Natural killer cell (primary cell): ENCODE measurements at regions of chr20 and their contacts with region 1.

Region 1: GRCh38 chr20:63478346-63479302 is 6.2 kb upstream of the KCNQ2 start:
- DNase-seq: no peak
- ATAC-seq: no peak
- H3K4me3 ChIP-seq: no peak overlapping the region
- H3K4me3 Mint-ChIP-seq: no peak overlapping the region
- H3K27ac ChIP-seq: no peak overlapping the region
- H3K27ac Mint-ChIP-seq: no peak overlapping the region
- H3K4me1 ChIP-seq: no peaks in the 10 kb centered on the region
- H3K4me1 Mint-ChIP-seq: peaks cover 0 to 6% of the 10 kb centered on the region in 2 donors
- H3K27me3 ChIP-seq: peaks cover 15% of the 10 kb centered on the region
- H3K27me3 Mint-ChIP-seq: peaks cover 36% of the 10 kb centered on the region in 2 donors
- CTCF ChIP-seq: no peak

Region 2: GRCh38 chr20:63416631-63417030 is 62.0 kb before region 1 on chr20:
- intact Hi-C with region 1: no loop called
- DNase-seq: no peak
- ATAC-seq: no peak
- H3K4me3 ChIP-seq: no peak overlapping the region
- H3K4me3 Mint-ChIP-seq: no peak overlapping the region
- H3K27ac ChIP-seq: no peak overlapping the region
- H3K27ac Mint-ChIP-seq: no peak overlapping the region
- H3K4me1 ChIP-seq: no peaks in the 10 kb centered on the region
- H3K4me1 Mint-ChIP-seq: no peaks in the 10 kb centered on the region
- H3K27me3 ChIP-seq: no peaks in the 10 kb centered on the region
- H3K27me3 Mint-ChIP-seq: peaks cover 0 to 3% of the 10 kb centered on the region in 2 donors
- CTCF ChIP-seq: no peak

Region 3: DNA sequence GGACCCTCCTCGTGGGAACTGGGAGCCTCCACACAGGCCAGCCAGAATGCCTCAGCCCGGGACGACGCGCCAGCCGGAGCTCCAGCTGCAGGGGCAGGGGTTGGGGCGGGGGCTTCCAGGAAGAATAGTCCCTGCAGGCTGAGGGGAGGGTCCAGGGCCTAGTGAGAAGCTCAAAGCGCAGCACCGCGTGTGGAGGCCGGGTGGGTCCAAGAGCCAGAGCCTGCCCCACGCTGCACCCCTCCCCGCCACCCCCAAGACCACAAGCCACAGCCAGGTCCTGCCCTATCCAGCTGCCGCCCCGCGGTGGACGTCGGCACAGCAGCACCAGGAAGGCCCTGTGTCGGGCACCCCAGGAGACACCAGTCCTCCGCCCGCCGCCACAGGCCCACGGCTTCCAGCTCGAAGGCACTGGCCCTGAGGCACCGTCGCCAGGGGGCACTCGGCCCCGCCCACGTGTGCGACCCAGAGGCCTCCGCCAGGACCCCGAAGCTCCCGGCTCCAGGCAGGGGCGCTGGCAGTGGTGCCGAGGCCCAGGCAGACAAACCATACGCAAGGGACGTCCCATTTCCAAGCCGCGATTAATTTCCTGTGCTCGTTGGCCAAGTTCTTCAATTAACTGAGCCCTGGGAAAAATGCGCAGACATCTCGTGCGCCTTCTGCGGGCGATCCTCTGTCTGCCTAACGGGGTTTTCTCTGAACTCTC is 25.7 kb before region 1 on chr20:
- intact Hi-C with region 1: no loop called
- DNase-seq: peak in 1 of 2 donors; percentile 33
- ATAC-seq: peak in 2 of 3 donors; percentile 9 to 62
- H3K4me3 ChIP-seq: no peak overlapping the region
- H3K4me3 Mint-ChIP-seq: no peak overlapping the region
- H3K27ac ChIP-seq: no peak overlapping the region
- H3K27ac Mint-ChIP-seq: no peak overlapping the region
- H3K4me1 ChIP-seq: peaks cover 15% of the 10 kb centered on the region
- H3K4me1 Mint-ChIP-seq: peaks cover 0 to 4% of the 10 kb centered on the region in 2 donors
- H3K27me3 ChIP-seq: peaks cover 9% of the 10 kb centered on the region
- H3K27me3 Mint-ChIP-seq: peaks cover 0 to 11% of the 10 kb centered on the region in 2 donors
- CTCF ChIP-seq: no peak

Region 4: DNA sequence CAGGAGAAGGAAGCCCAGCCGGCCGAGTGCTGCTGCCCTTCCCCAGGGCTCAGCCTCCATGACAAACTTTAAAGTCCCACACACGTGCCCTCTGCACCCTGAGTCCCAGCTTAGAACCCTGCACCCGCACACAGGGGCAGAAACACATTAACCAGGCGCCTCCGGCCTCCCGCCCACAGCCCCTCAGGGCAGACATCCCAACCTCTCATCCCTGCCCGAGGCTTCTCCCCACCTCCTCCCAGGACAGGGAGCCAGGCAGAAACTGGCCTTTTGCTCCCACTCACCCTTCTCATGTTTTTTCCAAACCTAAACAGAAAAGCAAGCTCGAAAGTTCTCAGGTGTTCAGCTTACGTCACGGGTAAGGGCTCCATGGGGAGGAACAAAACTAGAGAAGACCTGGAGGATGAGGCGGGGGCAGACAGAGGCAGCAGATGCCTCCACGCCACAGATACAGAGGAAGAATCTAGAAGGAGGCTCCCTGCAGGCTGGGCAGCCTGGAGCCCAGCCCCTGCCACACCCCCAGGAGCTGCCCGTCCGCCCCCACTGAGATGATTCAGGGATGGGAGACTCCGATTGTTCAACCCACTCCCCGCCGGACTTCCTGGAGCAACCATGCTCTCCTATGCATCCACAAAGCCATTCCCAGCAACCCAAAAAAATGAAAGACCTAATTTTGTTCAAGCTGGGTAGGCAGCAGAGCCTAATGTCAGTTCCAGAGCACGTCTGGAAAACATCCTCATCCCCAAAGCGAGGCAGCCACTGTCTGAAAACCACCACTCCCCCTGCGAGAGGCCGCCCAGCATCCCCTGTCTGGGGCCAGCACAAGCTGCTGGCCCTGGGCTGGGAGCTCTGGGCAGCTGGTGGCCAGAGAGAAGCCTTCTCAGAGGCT is 15.0 kb before region 1 on chr20:
- intact Hi-C with region 1: loop called (anchors 2 kb)
- DNase-seq: no peak
- ATAC-seq: no peak
- H3K4me3 ChIP-seq: no peak overlapping the region
- H3K4me3 Mint-ChIP-seq: no peak overlapping the region
- H3K27ac ChIP-seq: no peak overlapping the region
- H3K27ac Mint-ChIP-seq: no peak overlapping the region
- H3K4me1 ChIP-seq: no peaks in the 10 kb centered on the region
- H3K4me1 Mint-ChIP-seq: no peaks in the 10 kb centered on the region
- H3K27me3 ChIP-seq: no peaks in the 10 kb centered on the region
- H3K27me3 Mint-ChIP-seq: peaks cover 6 to 25% of the 10 kb centered on the region in 2 donors
- CTCF ChIP-seq: no peak

Region 5: DNA sequence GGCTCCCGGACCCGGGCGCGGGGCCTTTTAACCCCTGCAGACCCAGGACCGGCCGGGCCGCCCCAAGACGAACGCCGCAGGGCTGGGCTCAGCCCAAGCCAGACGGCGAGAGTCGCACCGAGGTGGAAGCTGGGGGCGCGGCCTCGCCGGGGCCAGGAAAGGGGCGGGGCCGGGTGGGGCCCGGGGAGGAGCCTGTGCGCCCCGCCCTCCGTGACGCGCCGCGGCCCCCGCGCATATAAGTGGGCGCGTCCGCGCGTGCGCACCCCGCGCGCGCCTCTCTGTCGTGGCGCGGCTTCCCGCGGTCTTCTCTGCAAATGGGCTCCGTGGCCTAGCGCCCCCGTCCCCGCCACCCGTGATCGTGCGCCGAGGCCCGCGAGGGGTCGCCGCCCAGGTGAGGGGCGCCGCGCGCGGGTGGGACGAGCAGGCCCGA is 41.9 kb after region 1 on chr20 and contains the start of gene PPDPF:
- intact Hi-C with region 1: no loop called
- DNase-seq: peak; percentile 87 to 94
- ATAC-seq: peak; percentile 85 to 96 (median 86)
- H3K4me3 ChIP-seq: peak within 1 kb of the TSS; percentile 66
- H3K4me3 Mint-ChIP-seq: peak within 1 kb of the TSS; percentile 83
- H3K27ac ChIP-seq: peak within 1 kb of the TSS; percentile 56
- H3K27ac Mint-ChIP-seq: peak within 1 kb of the TSS in 1 of 2 donors; percentile 81
- H3K4me1 ChIP-seq: peaks cover 23% of the 10 kb centered on the region
- H3K4me1 Mint-ChIP-seq: peaks cover 0 to 17% of the 10 kb centered on the region in 2 donors
- H3K27me3 ChIP-seq: peaks cover 4% of the 10 kb centered on the region
- H3K27me3 Mint-ChIP-seq: peaks cover 0 to 4% of the 10 kb centered on the region in 2 donors
- CTCF ChIP-seq: no peak
- total RNA-seq, gene PPDPF: 95.5 to 197 (median 159) TPM

Region 6: DNA sequence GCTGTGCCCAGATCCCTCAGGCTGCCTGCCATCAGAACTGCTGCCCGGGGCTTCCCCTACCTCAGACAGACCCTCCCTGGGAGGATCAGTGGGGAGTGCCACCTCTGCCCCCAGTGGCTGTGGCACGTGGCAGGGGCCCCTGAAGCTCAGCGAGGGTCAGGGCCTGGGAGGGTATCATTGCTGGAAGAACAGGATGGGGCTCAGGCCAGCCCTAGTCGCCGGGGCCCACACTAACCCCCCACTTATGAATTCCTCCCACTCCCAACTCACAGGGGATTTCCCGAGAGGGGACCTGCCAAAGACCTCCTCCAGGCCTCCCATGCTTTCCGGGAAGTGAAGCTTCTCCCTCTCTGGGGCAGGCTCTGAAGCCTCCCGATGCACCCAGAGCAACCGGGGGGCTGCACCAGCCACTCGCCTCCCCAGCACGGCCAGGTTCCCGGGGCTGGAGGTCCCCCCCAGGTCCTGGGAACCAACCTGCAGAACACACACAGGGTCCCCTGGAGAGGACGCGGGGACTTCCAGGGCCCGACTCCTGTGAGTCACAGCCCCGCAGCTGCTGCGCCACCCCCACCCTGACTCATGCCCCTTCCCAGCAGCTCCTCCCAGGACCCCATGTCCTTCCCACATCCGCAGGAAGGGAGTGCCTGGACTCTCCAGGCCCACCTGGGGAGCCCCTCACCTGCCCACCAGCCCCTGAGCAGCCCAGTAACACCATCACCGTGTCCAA is 220.3 kb after region 1 on chr20:
- intact Hi-C with region 1: no loop called
- DNase-seq: no peak
- ATAC-seq: no peak
- H3K4me3 ChIP-seq: no peak overlapping the region
- H3K4me3 Mint-ChIP-seq: no peak overlapping the region
- H3K27ac ChIP-seq: no peak overlapping the region
- H3K27ac Mint-ChIP-seq: no peak overlapping the region
- H3K4me1 ChIP-seq: peaks cover 44% of the 10 kb centered on the region
- H3K4me1 Mint-ChIP-seq: peaks cover 0 to 29% of the 10 kb centered on the region in 2 donors
- H3K27me3 ChIP-seq: no peaks in the 10 kb centered on the region
- H3K27me3 Mint-ChIP-seq: no peaks in the 10 kb centered on the region
- CTCF ChIP-seq: no peak